Calu3 (cell line): ENCODE measurements at regions of chr1 and their contacts with region 1.

Region 1: GRCh38 chr1:35726450-35727433 is 8.1 kb upstream of the C1orf216 start:
- DNase-seq: peak; percentile 49
- H3K4me3 Mint-ChIP-seq: no peak overlapping the region
- H3K27ac Mint-ChIP-seq: no peak overlapping the region
- H3K4me1 Mint-ChIP-seq: no peaks in the 10 kb centered on the region
- H3K27me3 Mint-ChIP-seq: no peaks in the 10 kb centered on the region
- CTCF ChIP-seq: peak; percentile 82

Region 2: DNA sequence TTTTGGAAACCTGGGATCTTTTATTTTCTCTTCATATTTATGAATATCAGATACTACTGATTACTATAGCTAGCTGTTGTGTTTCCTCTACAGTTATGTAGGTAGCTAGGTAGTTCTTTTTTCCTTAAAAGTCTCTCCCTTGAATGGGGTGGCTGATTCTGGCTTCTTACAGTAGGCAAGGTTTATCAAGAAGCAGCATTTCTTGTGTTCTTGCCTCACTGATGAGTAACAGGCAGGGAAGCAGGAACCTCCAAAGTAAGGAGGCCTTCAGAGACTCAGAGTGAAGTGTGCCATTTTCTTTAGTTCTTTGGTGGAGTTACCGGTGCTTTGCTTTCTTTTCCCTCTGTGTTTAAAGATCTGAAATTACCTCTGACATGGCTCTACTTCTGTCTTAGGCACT is 402.3 kb before region 1 on chr1:
- CTCF ChIA-PET with region 1: no interaction called
- intact Hi-C with region 1: no loop called
- DNase-seq: no peak
- H3K4me3 Mint-ChIP-seq: no peak overlapping the region
- H3K27ac Mint-ChIP-seq: no peak overlapping the region
- H3K4me1 Mint-ChIP-seq: peaks cover 35% of the 10 kb centered on the region
- H3K27me3 Mint-ChIP-seq: no peaks in the 10 kb centered on the region
- CTCF ChIP-seq: no peak

Region 3: DNA sequence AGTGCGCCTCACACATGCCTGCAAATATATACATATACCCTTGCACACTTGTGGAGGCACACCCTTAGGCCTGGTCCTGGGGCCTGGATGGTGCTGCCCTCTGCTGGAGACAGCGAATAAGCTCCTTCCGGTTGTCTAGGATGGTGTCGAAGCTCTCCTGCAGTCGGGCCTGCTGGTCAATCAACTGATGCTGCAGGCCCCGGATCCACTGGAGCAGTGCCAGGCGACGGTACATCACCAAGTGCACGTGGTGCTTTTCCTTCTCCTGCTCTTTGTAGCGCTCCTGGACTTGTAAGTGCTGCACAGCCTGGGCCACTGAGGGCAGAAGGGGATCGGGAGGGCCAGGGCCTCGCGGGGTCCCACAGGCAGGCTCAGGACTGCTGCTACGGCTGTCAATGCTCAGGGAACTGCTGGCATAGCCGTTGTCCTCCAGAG is 11.2 kb before region 1 on chr1:
- CTCF ChIA-PET with region 1: interaction called, 10 read pairs
- intact Hi-C with region 1: no loop called
- DNase-seq: peak; percentile 79
- H3K4me3 Mint-ChIP-seq: no peak overlapping the region
- H3K27ac Mint-ChIP-seq: no peak overlapping the region
- H3K4me1 Mint-ChIP-seq: peaks cover 24% of the 10 kb centered on the region
- H3K27me3 Mint-ChIP-seq: no peaks in the 10 kb centered on the region
- CTCF ChIP-seq: peak; percentile 65

Region 4: DNA sequence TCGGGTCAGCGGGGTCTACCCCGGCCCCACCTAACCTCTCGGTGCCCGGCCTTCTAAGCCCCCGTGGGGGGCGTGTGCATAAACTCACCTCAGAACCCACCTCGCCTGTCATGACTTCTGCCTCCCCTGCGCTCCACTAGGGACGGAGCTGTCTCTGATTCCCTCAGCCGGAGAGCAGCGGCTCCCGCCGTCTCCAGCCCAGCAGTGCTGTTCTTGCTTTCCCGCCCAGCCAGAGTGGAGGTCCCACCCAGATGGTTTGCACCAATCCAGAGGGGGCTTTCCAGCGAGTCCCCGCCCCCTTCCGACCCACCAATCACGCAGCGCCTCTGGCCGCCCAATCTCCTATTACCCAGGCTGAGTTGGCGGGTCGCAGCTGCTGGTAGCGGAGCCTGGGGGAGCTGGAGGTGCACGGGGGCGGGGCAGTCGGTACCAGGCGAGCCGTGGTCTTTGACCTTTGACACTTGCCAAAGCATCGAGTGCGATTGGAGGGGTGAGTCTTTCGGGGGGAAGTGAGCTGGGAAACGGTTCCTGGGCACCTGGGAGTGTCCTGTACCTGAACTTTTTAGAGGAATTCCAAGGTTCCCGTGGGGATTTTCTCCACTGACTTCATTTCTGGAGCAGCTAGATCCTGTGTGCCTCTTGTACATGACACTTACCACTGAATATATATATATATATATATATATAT is 43.2 kb after region 1 on chr1 and contains the start of gene CLSPN:
- CTCF ChIA-PET with region 1: interaction called, 4 read pairs
- intact Hi-C with region 1: loop called (anchors 5 kb)
- DNase-seq: peak; percentile 97
- H3K4me3 Mint-ChIP-seq: peak within 1 kb of the TSS; percentile 80
- H3K27ac Mint-ChIP-seq: peak within 1 kb of the TSS; percentile 68
- H3K4me1 Mint-ChIP-seq: no peaks in the 10 kb centered on the region
- H3K27me3 Mint-ChIP-seq: no peaks in the 10 kb centered on the region
- CTCF ChIP-seq: no peak
- total RNA-seq, gene CLSPN: 30.3 and 30.4 TPM in 2 replicates

Region 5: GRCh38 chr1:35876988-35877387 is 150.2 kb after region 1 on chr1:
- CTCF ChIA-PET with region 1: no interaction called
- intact Hi-C with region 1: no loop called
- DNase-seq: no peak
- H3K4me3 Mint-ChIP-seq: no peak overlapping the region
- H3K27ac Mint-ChIP-seq: no peak overlapping the region
- H3K4me1 Mint-ChIP-seq: peaks cover 4% of the 10 kb centered on the region
- H3K27me3 Mint-ChIP-seq: peaks cover 8% of the 10 kb centered on the region
- CTCF ChIP-seq: no peak